ENCODE measurements at regions of chr18 and their contacts with region 1.

Region 1: DNA sequence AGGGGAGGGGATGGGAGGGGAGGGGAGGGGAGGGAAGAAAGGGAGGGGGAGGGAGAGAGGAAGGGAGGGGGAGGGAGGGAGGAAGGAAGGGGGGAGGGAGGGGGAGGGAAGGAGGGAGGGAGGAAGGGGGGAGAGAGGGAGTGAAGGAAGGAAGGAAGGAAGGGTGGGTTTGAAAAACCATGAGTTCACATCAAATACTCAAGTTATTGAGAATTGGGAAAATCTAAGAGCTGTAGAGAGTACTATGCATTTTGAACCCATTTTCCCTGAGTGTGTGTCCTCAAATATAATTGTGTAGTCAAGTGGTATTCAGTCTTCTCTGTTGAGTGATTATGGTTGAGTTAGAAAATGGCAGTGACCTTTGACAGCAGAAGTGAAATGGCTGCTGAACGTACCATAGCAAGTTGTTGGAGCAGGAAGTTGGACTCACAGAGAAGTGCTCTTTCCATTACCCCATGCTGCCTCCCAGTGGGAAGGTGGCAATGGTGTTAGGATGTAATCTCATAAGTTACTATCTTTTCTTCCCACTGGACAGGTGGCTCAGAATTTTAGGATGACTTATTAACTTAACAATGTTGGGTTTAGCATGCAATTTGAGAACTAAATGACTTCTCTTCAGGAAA is 214.6 kb downstream of the SETBP1 start:
- DNase-seq: peak; percentile 31
- ATAC-seq: peak; percentile 50 to 72

Region 2: DNA sequence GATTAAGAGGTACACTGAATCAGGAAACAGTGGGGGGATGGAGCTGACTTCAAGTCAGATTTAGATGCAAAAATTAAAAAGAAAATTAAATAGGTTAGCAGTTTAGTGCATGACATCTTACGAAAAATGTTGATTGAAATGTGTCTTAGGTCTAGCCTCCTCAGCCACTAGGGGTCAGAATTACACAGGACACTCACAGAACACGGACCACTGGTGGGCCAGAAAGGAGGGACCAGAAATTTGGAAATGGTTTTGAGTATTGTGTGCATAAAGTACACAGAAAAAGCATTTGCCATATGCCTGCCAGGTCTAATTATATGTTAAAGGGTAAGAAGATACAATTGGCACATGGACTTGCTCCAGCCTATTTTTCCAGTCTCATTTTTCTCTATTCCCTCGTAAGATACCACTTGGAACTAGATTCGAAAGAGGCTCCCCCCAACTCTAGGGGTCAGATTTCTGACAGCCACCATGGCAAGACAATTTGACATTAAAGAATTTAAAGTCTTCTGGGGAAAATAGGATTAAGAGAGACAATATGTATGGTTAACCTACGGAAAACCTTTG is 764.8 kb before region 1 on chr18:
- intact Hi-C with region 1: loop called in 1 of 2 experiments (anchors 10 kb)
- DNase-seq: peak; percentile 23
- ATAC-seq: peak in 1 of 2 donors; percentile 57

Region 3: DNA sequence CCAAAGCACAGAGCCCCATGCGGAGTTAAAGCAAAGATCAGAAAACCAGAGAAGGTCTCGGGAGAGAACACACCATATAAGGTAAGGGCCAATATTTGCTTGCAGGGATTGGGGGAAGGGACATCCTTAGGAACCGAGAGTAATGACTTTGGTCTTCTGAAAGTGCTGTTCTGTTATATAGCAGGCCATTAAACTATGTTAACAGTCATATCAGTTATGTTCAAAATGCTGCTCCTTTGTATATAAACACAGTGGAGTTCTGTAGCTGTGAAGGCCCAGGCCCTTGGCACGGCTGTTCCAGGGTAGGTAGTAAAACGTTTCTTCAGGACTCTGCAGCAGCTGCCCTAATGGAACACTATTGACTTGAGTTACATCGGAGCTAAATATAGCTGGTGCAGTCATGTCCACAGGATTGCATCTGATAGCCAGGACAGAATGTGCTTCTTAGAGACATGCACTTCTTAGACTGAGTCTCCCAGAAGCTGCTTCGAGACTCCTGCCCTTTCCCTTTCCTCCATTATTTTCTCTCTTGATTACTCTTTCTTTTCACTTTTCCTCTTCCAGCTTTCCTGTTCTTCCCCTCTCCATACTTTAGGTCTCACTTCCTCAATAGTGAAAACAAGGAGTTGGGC is 92.2 kb before region 1 on chr18:
- intact Hi-C with region 1: no loop called
- DNase-seq: no peak
- ATAC-seq: peak; percentile 85 to 91

Region 4: DNA sequence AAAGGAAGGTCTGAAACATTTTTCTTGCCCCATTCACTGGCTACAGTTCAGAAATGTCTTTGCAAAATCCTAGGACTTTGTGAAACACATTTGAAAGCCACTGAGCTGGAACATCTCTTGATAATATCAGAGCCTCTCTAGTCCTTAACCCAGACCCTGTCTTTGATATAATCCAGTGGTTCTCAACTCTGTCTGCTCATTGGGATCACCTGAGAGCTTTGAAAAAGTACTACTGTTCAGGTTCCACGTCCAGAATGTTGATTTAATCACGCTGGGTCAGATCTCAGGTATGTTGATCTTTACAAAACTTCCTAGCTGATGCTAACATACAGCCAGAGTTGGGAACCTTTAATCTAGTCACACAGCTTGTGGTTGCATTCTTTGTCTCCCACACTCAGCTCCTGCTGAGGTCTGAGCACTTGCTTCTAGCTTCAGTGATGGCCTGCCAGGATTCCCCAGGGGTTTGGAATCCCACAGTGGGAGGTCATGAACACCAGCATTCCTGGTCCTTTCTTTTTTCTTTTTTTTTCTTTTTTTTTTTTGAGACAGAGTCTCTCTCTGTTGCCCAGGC is 48.1 kb after region 1 on chr18:
- intact Hi-C with region 1: loop called in 1 of 2 experiments (anchors 10 kb)
- DNase-seq: no peak
- ATAC-seq: no peak